GM12878 (cell line): ENCODE measurements at regions of chr4 and their contacts with region 1.

Region 1: DNA sequence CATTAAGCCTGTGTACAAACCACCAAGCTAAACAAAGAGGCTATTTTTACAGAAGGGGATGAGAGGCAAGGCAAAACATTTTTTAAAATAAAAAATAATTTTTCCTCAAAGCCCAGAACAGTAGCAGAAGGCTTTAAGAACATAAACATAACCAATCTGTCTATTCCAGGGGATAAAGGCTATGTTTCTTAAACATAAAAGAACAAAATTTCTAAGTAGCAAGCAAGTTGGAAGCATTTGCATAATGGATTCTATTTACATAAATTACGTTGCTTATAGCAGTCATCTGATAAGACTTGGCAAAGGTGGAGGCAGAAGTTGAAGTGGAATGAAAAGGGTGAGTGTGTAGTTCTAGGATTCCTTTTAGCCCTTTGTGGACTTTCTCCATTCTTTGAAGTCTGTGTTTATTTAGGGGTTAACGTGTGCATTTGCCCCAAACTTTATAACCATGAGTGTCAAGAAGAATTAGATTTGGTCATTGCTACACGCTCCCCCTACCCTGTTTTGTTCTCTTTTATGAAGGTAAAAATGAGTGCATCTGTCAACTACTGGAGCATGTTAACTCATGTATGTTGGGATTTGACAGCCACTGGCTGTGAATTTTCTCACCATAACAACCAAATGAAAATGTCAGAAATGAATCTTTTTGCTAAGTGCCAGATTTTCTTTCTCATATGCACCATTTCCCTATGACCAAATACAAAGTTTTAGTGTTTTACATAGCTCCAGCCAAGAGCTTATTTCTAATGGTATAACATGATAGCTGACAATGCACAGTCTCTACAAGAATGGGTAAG is 378.4 kb upstream of the IGFBP7 start:
- DNase-seq: no peak
- ATAC-seq: no peak
- H3K4me3 ChIP-seq: no peak overlapping the region
- H3K27ac ChIP-seq: no peak overlapping the region
- H3K4me1 ChIP-seq: no peaks in the 10 kb centered on the region
- H3K27me3 ChIP-seq: no peaks in the 10 kb centered on the region
- CTCF ChIP-seq: no peak
- EP300 ChIP-seq: no peak
- POLR2A ChIP-seq: no peak
- RAD21 ChIP-seq: no peak

Region 2: GRCh38 chr4:57445686-57446085 is 42.9 kb before region 1 on chr4:
- CTCF ChIA-PET with region 1: no interaction called
- POLR2A ChIA-PET with region 1: no interaction called
- RAD21 ChIA-PET with region 1: no interaction called
- SMC1A ChIA-PET with region 1: no interaction called
- in situ Hi-C with region 1: no loop called
- intact Hi-C with region 1: no loop called
- DNase-seq: no peak
- ATAC-seq: no peak
- H3K4me3 ChIP-seq: no peak overlapping the region
- H3K27ac ChIP-seq: no peak overlapping the region
- H3K4me1 ChIP-seq: no peaks in the 10 kb centered on the region
- H3K27me3 ChIP-seq: no peaks in the 10 kb centered on the region
- CTCF ChIP-seq: no peak
- EP300 ChIP-seq: no peak
- POLR2A ChIP-seq: no peak
- RAD21 ChIP-seq: no peak

Region 3: GRCh38 chr4:57575426-57575825 is 86.9 kb after region 1 on chr4:
- CTCF ChIA-PET with region 1: no interaction called
- POLR2A ChIA-PET with region 1: interaction called, 11 read pairs
- RAD21 ChIA-PET with region 1: no interaction called
- SMC1A ChIA-PET with region 1: no interaction called
- in situ Hi-C with region 1: no loop called
- intact Hi-C with region 1: no loop called
- DNase-seq: no peak
- ATAC-seq: no peak
- H3K4me3 ChIP-seq: no peak overlapping the region
- H3K27ac ChIP-seq: no peak overlapping the region
- H3K4me1 ChIP-seq: no peaks in the 10 kb centered on the region
- H3K27me3 ChIP-seq: no peaks in the 10 kb centered on the region
- CTCF ChIP-seq: no peak
- EP300 ChIP-seq: no peak
- POLR2A ChIP-seq: no peak
- RAD21 ChIP-seq: no peak